H1 (cell line): ENCODE measurements at regions of chr9 and their contacts with region 1.

Region 1: DNA sequence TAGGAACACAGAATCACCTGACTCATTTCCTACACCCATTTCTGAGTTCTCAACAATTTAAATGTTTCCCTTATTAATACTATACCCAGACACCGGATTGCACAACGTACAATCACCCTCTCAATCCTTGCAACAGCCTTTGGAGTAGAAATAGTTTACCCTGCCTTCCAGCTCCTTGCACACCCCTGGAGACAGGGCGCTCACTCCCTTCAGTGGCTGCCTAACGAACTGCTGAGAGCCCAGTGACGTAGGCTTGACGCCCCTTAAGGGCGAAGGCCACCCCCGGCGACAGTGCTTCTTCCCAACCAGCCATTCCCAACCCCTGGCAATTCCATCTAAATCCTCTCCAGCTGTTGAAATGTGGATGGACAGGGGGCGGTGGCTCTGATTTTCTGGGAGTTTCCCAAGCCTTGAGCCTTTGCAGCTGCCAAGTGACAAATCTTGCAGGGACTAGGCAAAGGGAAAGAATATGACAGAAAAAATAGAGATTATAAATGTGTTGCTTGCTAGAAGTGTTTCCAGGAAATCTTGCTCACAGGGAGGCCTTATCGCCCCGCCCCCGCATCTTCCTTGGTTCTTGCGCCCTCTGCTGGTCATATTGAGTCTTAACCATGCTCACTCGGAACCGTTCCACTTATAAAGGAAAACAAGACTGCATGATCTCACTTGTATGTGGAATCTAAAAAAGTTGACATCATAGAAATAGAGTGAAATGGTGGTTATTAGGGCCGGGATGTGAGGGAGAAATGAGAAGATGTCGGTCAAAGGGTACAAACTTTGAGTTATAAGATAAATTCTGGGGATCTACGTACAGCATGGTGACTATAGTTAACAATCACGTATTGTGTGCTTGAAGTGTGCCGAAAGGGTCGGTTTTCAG is 7.6 kb upstream of the BARX1 start:
- DNase-seq: peak in 1 of 2 experiments; percentile 80
- H3K4me3 ChIP-seq: no peak overlapping the region
- H3K27ac ChIP-seq: no peak overlapping the region
- H3K4me1 ChIP-seq: peaks cover 0 to 21% (median 15%) of the 10 kb centered on the region in 4 experiments; a peak in 6 of 7 replicates
- H3K27me3 ChIP-seq: peaks cover 40 to 51% (median 48%) of the 10 kb centered on the region in 4 experiments
- CTCF ChIP-seq: peak in 2 of 3 experiments; percentile 79 to 80; a peak in 3 of 4 replicates
- EP300 ChIP-seq: no peak
- POLR2A ChIP-seq: no peak
- RAD21 ChIP-seq: peak; percentile 81 to 84

Region 2: DNA sequence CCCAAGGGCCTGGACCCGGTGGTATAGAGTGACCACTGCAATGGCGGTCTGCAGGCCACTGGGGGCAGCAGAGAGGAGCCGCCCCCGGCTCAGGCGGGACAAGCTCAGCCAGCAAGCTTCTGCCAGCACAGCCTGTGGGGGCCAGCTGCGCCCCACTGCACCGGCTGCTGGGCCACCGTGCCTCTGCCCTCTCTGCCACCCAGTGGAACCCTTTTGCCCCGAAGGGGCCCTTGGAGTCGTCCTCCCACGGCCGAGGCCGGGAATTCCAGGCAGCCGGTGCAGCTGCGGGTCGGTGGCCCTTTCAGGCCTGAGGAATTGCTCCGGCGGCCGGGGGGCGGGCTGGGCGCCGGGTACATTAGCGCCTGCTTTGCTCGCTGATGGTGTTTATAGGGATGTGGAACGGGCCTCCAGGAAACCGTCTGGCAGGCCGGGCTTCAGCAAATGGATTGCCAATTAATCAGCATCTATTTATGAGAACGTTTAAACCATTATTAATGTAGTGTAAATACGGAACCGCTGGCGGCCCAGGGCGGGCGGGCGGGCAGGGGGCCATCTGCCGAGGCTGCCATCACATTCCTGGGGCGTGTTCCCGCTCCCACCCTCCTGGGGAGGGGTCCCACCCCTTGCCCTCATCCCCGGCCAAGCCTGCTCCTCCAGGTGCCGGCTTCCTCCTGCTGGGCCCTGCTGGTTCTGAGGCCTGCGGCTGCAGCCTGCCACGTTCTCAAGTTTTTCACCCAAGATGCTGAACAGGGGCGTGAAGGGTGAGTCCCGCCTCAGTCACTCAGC is 135.1 kb before region 1 on chr9:
- CTCF ChIA-PET with region 1: interaction called, 20 read pairs
- POLR2A ChIA-PET with region 1: interaction called, 3 read pairs
- DNase-seq: peak in 1 of 2 experiments; percentile 89
- H3K4me3 ChIP-seq: peak overlapping the region in 3 of 4 experiments; percentile 12 to 55 (median 19); a peak in 4 of 8 replicates
- H3K27ac ChIP-seq: no peak overlapping the region
- H3K4me1 ChIP-seq: peaks cover 4 to 15% (median 11%) of the 10 kb centered on the region in 4 experiments; a peak in 6 of 7 replicates
- H3K27me3 ChIP-seq: peaks cover 0 to 9% (median 5%) of the 10 kb centered on the region in 4 experiments; a peak in 3 of 7 replicates
- CTCF ChIP-seq: peak in 2 of 3 experiments; percentile 86 to 92; a peak in 3 of 4 replicates
- EP300 ChIP-seq: no peak
- POLR2A ChIP-seq: no peak
- RAD21 ChIP-seq: peak; percentile 57 to 70

Region 3: DNA sequence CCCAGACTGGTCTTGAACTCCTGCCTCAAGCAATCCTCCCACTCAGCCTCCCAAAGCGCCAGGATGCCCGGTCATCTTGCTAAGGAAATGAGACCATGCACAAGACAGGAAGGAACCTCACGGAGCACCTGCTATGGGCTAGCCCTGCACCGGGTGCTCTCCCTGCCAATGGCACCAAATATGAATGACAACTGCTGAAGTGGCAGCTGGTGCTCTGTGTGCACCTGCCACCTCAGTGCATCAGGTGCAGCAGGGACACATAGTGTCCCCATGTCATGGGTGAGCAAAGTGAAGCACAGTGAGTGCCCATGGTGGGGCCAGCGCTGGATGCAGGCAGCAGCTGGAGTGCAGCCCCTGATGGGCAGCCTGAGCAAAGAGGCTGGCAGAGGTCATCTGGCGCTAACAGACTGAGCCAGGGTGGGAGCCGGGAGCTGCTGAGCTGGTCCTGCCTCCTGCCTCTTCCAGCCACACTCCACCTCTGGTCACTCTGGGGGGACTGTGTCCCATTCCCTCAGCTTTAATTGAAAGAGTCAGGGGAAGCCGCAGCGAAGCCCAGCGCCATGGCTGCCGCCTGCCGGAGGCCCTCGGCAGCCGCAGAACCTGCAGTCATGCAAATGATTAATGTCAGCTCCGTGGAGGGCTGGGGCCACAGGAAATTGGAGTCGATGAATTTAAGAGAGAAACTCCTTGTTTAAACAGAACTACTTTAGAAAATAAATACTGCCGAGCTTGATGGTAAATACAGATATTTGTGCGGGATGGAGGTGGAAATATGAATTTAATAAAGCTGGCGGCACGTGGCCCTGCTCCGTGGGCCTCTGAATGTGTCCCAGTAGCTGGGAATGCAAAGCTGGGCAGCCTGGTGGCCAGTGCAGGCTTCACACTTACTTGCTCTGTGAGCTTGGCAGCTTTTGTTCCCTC is 54.0 kb before region 1 on chr9:
- CTCF ChIA-PET with region 1: interaction called, 46 read pairs
- POLR2A ChIA-PET with region 1: no interaction called
- DNase-seq: no peak
- H3K4me3 ChIP-seq: no peak overlapping the region
- H3K27ac ChIP-seq: no peak overlapping the region
- H3K4me1 ChIP-seq: peaks cover 2 to 9% (median 7%) of the 10 kb centered on the region in 4 experiments; a peak in 6 of 7 replicates
- H3K27me3 ChIP-seq: no peaks in the 10 kb centered on the region
- CTCF ChIP-seq: no peak
- EP300 ChIP-seq: no peak
- POLR2A ChIP-seq: no peak
- RAD21 ChIP-seq: no peak

Region 4: GRCh38 chr9:93950619-93951601 is 11.9 kb before region 1 on chr9:
- CTCF ChIA-PET with region 1: interaction called, 143 read pairs
- POLR2A ChIA-PET with region 1: interaction called, 20 read pairs
- DNase-seq: peak in 1 of 2 experiments; percentile 75
- H3K4me3 ChIP-seq: peak overlapping the region; percentile 14 to 57 (median 24); a peak in 7 of 8 replicates
- H3K27ac ChIP-seq: no peak overlapping the region
- H3K4me1 ChIP-seq: peaks cover 0 to 73% (median 42%) of the 10 kb centered on the region in 4 experiments; a peak in 6 of 7 replicates
- H3K27me3 ChIP-seq: peaks cover 96 to 99% (median 96%) of the 10 kb centered on the region in 4 experiments
- CTCF ChIP-seq: no peak
- EP300 ChIP-seq: no peak
- POLR2A ChIP-seq: no peak
- RAD21 ChIP-seq: no peak

Region 5: GRCh38 chr9:94002316-94003140 is 39.7 kb after region 1 on chr9:
- CTCF ChIA-PET with region 1: interaction called, 32 read pairs
- POLR2A ChIA-PET with region 1: no interaction called
- DNase-seq: peak in 1 of 2 experiments; percentile 75
- H3K4me3 ChIP-seq: no peak overlapping the region
- H3K27ac ChIP-seq: no peak overlapping the region
- H3K4me1 ChIP-seq: peaks cover 0 to 2% (median under 1%) of the 10 kb centered on the region in 4 experiments; a peak in 2 of 7 replicates
- H3K27me3 ChIP-seq: no peaks in the 10 kb centered on the region
- CTCF ChIP-seq: peak in 2 of 3 experiments; percentile 87 to 89; a peak in 3 of 4 replicates
- EP300 ChIP-seq: no peak
- POLR2A ChIP-seq: no peak
- RAD21 ChIP-seq: peak; percentile 81 to 87